ENCODE measurements at regions of chr13 and their contacts with region 1.

Region 1: GRCh38 chr13:102773441-102774215 is at the start of gene TEX30:
- DNase-seq: peak; percentile 94
- ATAC-seq: peak; percentile 95
- H3K4me3 Mint-ChIP-seq: peak within 1 kb of the TSS; percentile 95
- H3K27ac Mint-ChIP-seq: peak within 1 kb of the TSS; percentile 94
- H3K4me1 Mint-ChIP-seq: peaks cover 13% of the 10 kb centered on the region
- H3K27me3 Mint-ChIP-seq: no peaks in the 10 kb centered on the region
- CTCF ChIP-seq: no peak
- total RNA-seq, gene TEX30: 5.3 and 6.2 TPM in 2 replicates

Region 2: DNA sequence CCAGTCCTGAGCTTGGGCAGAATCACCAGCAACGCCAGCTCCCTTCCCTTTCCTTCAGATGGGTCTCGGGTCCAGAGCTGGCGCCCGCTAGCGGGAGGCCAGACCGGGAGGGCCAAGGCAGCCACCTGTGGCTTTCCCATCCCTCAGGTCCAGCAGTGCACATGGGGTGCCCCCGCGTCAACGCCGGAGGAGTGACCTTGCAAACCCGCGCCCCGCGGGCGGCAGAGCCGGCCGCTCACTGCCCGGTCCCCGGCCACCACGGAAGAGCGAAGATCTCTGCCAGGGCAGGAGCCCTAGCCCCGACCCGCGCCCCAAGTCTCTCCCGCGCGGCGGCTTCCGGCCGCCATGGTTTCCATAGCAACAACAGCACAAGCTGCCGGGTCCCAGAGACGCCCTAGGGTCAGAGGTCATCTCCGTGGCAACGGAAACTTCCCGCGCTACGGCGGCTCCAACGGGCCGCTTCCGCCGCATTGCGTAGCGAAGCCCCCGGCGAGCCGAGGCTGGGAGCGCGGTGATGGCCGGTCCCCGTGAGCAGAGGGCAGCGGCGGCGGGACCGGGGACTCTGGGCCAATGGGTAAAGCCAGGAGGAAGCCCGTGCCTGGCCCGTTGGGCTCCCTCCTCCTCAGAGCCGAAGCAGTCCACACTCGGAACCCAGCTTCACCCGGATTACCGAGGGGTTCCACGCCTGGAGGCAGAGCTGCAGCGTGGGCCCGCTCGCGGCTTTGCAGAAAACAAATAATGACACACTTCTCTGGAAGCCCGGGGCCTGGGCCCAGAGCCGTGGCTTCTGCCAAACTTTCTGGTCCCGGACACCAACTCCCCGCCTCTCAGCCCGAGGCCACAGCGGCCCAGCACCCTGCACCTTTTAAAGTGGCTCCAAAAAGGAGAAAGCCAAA is 379.2 kb before region 1 on chr13:
- CTCF ChIA-PET with region 1: no interaction called
- POLR2A ChIA-PET with region 1: no interaction called
- intact Hi-C with region 1: loop called (anchors 1 kb)
- DNase-seq: peak; percentile 88
- ATAC-seq: peak; percentile 94
- H3K4me3 Mint-ChIP-seq: peak overlapping the region; percentile 87
- H3K27ac Mint-ChIP-seq: peak overlapping the region; percentile 56
- H3K4me1 Mint-ChIP-seq: peaks cover 8% of the 10 kb centered on the region
- H3K27me3 Mint-ChIP-seq: peaks cover 16% of the 10 kb centered on the region
- CTCF ChIP-seq: no peak

Region 3: GRCh38 chr13:102596147-102597028 is 177.2 kb before region 1 on chr13 and contains the start of gene TPP2:
- CTCF ChIA-PET with region 1: no interaction called
- POLR2A ChIA-PET with region 1: interaction called, 22 read pairs
- intact Hi-C with region 1: loop called (anchors 1 kb)
- DNase-seq: peak; percentile 97
- ATAC-seq: peak; percentile 92
- H3K4me3 Mint-ChIP-seq: peak within 1 kb of the TSS; percentile 96
- H3K27ac Mint-ChIP-seq: peak within 1 kb of the TSS; percentile 98
- H3K4me1 Mint-ChIP-seq: peaks cover 60% of the 10 kb centered on the region
- H3K27me3 Mint-ChIP-seq: no peaks in the 10 kb centered on the region
- CTCF ChIP-seq: no peak
- total RNA-seq, gene TPP2: 43.7 and 53.1 TPM in 2 replicates

Region 4: DNA sequence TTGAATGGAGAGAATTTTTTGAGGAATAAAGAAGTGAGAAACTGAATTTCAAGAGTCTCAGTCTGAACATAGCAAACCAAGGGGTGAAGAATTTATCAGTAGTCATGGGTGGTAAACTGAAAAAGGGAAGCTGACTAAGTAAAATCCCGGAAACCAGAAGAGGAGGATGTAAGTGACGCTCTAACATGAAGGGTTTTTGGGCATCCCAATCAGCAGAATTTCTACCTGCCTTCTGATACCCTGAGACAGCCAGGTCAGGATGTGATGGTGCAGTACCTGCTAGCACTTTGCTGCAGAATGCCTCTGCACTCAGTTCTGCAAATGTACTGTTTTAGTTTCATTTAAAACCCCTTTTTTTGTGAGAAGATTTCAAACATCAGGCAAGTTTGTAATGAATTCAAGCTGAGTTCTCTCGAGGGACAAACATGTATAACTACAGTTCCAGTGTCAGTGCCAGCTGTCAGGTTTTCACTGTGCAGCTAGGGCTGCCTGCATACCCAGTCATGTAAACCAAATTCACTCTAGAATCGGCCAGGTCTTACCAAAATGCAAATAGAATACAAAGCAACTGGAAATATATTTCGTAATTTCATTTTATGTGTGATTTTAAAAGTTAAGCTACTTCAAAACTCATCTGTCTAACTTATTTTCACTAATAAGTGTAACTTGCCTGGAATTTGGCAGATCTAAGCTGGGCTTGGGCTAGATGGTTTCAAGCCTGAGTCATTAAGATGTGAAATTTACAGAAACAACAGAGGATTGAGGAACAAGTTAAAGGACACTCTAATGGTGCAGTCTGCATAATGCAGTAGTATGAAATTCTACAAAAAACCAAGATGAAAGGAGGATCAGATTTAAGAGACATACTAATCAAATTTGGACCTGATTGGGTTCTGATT is 92.5 kb before region 1 on chr13:
- CTCF ChIA-PET with region 1: no interaction called
- POLR2A ChIA-PET with region 1: interaction called, 3 read pairs
- intact Hi-C with region 1: loop called (anchors 1 kb)
- DNase-seq: no peak
- ATAC-seq: peak; percentile 69
- H3K4me3 Mint-ChIP-seq: no peak overlapping the region
- H3K27ac Mint-ChIP-seq: peak overlapping the region; percentile 62
- H3K4me1 Mint-ChIP-seq: peaks cover 21% of the 10 kb centered on the region
- H3K27me3 Mint-ChIP-seq: no peaks in the 10 kb centered on the region
- CTCF ChIP-seq: no peak

Region 5: GRCh38 chr13:102793583-102794355 is 20.1 kb after region 1 on chr13:
- CTCF ChIA-PET with region 1: no interaction called
- POLR2A ChIA-PET with region 1: interaction called, 11 read pairs
- intact Hi-C with region 1: no loop called
- DNase-seq: no peak
- ATAC-seq: no peak
- H3K4me3 Mint-ChIP-seq: no peak overlapping the region
- H3K27ac Mint-ChIP-seq: no peak overlapping the region
- H3K4me1 Mint-ChIP-seq: peaks cover 6% of the 10 kb centered on the region
- H3K27me3 Mint-ChIP-seq: peaks cover 3% of the 10 kb centered on the region
- CTCF ChIP-seq: no peak

Region 6: DNA sequence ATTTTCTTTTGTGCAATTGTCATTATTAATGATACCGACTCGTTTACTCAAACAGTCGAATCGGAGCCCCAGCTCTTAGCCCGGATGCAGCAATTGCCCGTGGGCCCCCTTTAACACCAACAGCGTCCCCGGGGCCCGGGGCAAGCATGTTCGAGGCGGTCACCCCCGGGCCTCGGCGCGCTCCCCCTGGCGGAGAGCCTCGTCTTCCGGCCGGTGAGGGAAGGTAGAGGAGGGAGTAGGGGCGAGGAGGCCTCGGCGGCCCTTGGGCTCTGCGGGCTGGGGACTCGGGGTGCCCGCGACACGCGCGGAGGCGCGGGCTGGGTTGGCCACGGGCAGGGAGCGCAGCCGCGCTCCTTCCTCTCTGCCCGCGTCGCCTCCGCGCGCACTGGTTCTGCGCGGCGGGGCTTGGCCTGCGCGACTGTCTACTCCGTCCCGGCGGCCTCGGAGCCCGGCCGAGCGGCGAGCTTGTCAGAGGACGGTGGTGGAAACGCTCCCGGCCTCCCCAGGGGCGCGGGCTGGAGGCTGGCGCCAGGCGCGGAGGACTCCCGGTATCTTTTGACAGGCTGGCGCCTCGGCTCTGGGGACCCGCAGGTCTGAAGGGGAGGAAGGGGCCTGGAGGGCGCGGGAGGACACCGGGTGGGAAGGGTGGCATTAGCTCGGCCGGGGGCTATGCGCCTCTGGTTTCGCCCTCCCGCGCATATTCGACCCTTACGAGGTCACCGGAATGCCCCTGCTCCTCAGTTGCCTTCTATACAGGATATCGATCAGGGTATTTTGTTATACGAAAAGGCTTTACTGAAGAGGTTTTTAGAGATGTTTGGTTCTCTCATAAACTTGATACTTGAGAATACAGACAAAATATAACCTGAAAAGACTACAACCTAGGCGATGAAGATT is 26.8 kb after region 1 on chr13:
- CTCF ChIA-PET with region 1: interaction called, 5 read pairs
- POLR2A ChIA-PET with region 1: interaction called, 18 read pairs
- intact Hi-C with region 1: loop called (anchors 1 kb)
- DNase-seq: peak; percentile 79
- ATAC-seq: peak; percentile 89
- H3K4me3 Mint-ChIP-seq: peak overlapping the region; percentile 85
- H3K27ac Mint-ChIP-seq: no peak overlapping the region
- H3K4me1 Mint-ChIP-seq: peaks cover 18% of the 10 kb centered on the region
- H3K27me3 Mint-ChIP-seq: peaks cover 7% of the 10 kb centered on the region
- CTCF ChIP-seq: no peak